Left colon (tissue), 2 donors: ENCODE measurements at regions of chr6 and their contacts with region 1.

Region 1: DNA sequence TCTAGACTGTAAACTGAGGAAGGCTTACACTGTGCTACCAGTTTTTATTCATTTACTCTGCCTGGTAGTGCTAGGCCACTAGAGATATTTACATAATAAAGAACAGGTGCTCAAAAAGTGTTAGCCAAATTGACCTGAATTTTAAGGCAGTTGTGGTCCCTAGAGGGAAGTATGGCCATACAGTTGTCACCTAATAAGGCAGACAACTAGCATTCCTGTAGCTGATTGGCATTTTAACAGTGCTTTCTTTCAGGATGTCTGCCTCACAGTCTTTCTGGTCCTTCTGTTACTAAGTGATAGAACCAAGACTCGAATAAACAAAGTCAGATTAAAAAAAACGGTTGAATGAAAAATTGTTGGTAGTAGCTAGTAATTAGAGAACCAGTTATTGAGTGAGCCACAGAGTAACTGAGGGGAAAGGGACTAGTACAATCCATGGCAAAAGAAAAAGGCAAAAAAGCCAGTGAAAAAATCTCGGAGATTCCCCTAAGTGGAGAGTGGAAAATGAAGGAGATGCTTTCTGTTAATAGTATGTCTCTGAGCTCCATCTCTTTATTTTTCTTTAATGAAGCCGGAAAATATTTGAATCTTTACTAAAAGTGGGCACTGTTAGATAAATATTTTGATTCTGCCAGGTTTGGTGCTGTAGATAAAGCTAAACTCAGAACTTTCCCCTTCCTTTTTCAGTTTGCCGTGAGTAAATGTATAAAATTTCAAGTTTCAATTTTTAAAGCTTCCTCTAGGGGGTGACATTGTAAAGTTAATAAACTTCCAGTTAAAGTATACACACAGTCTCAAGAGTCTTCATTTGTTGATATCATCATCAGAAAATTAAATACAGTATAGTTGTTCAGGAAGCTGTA is 9.1 kb downstream of the VTA1 start:
- DNase-seq: no peak
- ATAC-seq: peak; percentile 41

Region 2: GRCh38 chr6:142395768-142396231 is 239.7 kb after region 1 on chr6:
- intact Hi-C with region 1: loop called in 1 of 2 experiments (anchors 10 kb)
- DNase-seq: no peak
- ATAC-seq: no peak